Dorsolateral prefrontal cortex (tissue), 120 donors: ENCODE measurements at regions of chr22 and their contacts with region 1.

Region 1: GRCh38 chr22:42544686-42545085 is 9.1 kb upstream of the SERHL2 start:
- DNase-seq: no peak
- H3K4me3 ChIP-seq: no peak overlapping the region
- H3K27ac ChIP-seq: peak overlapping the region in 3 of 59 donors; percentile 8 to 38 (median 30)
- H3K27me3 ChIP-seq: no peaks in the 10 kb centered on the region
- CTCF ChIP-seq: no peak

Region 2: GRCh38 chr22:42511401-42511891 is 33.2 kb before region 1 on chr22:
- intact Hi-C with region 1: loop called in 1 of 2 experiments (anchors 5 kb)
- DNase-seq: no peak
- H3K4me3 ChIP-seq: no peak overlapping the region
- H3K27ac ChIP-seq: peak overlapping the region in 7 of 59 donors; percentile 5 to 41 (median 25)
- H3K27me3 ChIP-seq: no peaks in the 10 kb centered on the region
- CTCF ChIP-seq: no peak